ENCODE measurements at regions of chr6 and their contacts with region 1.

Region 1: GRCh38 chr6:158026054-158026900 is 44.6 kb downstream of the SYNJ2 start:
- DNase-seq: peak; percentile 78 to 93
- ATAC-seq: peak; percentile 87 to 90
- H3K4me3 ChIP-seq: no peak overlapping the region
- H3K27ac ChIP-seq: peak overlapping the region; percentile 87 to 94
- H3K4me1 ChIP-seq: peaks cover 67% of the 10 kb centered on the region
- CTCF ChIP-seq: peak; percentile 53
- EP300 ChIP-seq: peak; percentile 68 to 77; a peak in 2 of 5 replicates
- POLR2A ChIP-seq: no peak
- RAD21 ChIP-seq: peak; percentile 32 to 49; a peak in 4 of 5 replicates

Region 2: GRCh38 chr6:156791320-156791850 is 1234.9 kb before region 1 on chr6:
- CTCF ChIA-PET with region 1: no interaction called
- POLR2A ChIA-PET with region 1: no interaction called
- DNase-seq: no peak
- ATAC-seq: no peak
- H3K4me3 ChIP-seq: no peak overlapping the region
- H3K27ac ChIP-seq: no peak overlapping the region
- H3K4me1 ChIP-seq: peaks cover 21% of the 10 kb centered on the region
- CTCF ChIP-seq: no peak
- EP300 ChIP-seq: no peak
- POLR2A ChIP-seq: no peak
- RAD21 ChIP-seq: no peak

Region 3: GRCh38 chr6:157921685-157922367 is 104.5 kb before region 1 on chr6:
- CTCF ChIA-PET with region 1: no interaction called
- POLR2A ChIA-PET with region 1: no interaction called
- DNase-seq: no peak
- ATAC-seq: no peak
- H3K4me3 ChIP-seq: no peak overlapping the region
- H3K27ac ChIP-seq: no peak overlapping the region
- H3K4me1 ChIP-seq: no peaks in the 10 kb centered on the region
- CTCF ChIP-seq: no peak
- EP300 ChIP-seq: no peak
- POLR2A ChIP-seq: no peak
- RAD21 ChIP-seq: no peak

Region 4: DNA sequence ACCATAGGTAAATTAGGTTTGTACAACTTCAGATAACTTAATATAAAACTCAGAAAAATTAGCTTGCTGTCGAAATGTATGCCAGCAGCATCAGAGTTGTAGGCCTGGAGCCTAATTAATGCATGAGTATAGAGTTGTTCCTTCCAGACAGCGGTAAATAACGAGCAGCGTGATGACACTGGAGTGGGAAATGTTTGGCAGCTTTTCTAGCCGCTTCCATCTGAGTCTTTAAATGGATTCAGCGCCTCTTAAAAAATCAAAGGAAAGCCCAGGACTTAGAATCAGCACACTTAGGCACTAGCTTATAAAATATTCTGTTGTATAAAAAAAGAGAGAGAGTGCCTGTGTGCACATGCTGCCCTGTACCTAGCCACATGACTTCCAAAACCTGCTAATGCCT is 88.4 kb before region 1 on chr6:
- CTCF ChIA-PET with region 1: no interaction called
- POLR2A ChIA-PET with region 1: no interaction called
- DNase-seq: no peak
- ATAC-seq: no peak
- H3K4me3 ChIP-seq: no peak overlapping the region
- H3K27ac ChIP-seq: no peak overlapping the region
- H3K4me1 ChIP-seq: no peaks in the 10 kb centered on the region
- CTCF ChIP-seq: no peak
- EP300 ChIP-seq: no peak
- POLR2A ChIP-seq: no peak
- RAD21 ChIP-seq: no peak

Region 5: GRCh38 chr6:157981395-157982296 is 44.6 kb before region 1 on chr6 and contains the start of gene SYNJ2:
- CTCF ChIA-PET with region 1: interaction called, 26 read pairs
- POLR2A ChIA-PET with region 1: interaction called, 4 read pairs
- DNase-seq: peak; percentile 67 to 71
- ATAC-seq: peak; percentile 77 to 78
- H3K4me3 ChIP-seq: peak within 1 kb of the TSS; percentile 89
- H3K27ac ChIP-seq: peak within 1 kb of the TSS; percentile 89 to 97
- H3K4me1 ChIP-seq: peaks cover 40% of the 10 kb centered on the region
- CTCF ChIP-seq: peak; percentile 61
- EP300 ChIP-seq: no peak
- POLR2A ChIP-seq: no peak; the same call in 1 of the 2 replicates
- RAD21 ChIP-seq: peak; percentile 12 to 61; a peak in 3 of 5 replicates
- polyA plus RNA-seq, gene SYNJ2: 22.3 and 24.7 TPM in 2 replicates

Region 6: GRCh38 chr6:157989541-157990289 is 36.6 kb before region 1 on chr6:
- CTCF ChIA-PET with region 1: interaction called, 26 read pairs
- POLR2A ChIA-PET with region 1: no interaction called
- DNase-seq: peak in 1 of 2 experiments; percentile 50
- ATAC-seq: peak; percentile 65 to 68
- H3K4me3 ChIP-seq: 0 out of 3 replicates have a peak overlapping the region, but pooled peaks have one; percentile 11
- H3K27ac ChIP-seq: peak overlapping the region; percentile 78 to 82
- H3K4me1 ChIP-seq: peaks cover 84% of the 10 kb centered on the region
- CTCF ChIP-seq: no peak
- EP300 ChIP-seq: peak in 1 of 2 experiments; percentile 20; a peak in 1 of 5 replicates
- POLR2A ChIP-seq: no peak
- RAD21 ChIP-seq: no peak

Region 7: GRCh38 chr6:158006821-158007570 is 19.3 kb before region 1 on chr6:
- CTCF ChIA-PET with region 1: interaction called, 11 read pairs
- POLR2A ChIA-PET with region 1: interaction called, 3 read pairs
- DNase-seq: no peak
- ATAC-seq: no peak
- H3K4me3 ChIP-seq: no peak overlapping the region
- H3K27ac ChIP-seq: no peak overlapping the region
- H3K4me1 ChIP-seq: peaks cover 32% of the 10 kb centered on the region; the same call in 2 of the 3 replicates
- CTCF ChIP-seq: no peak
- EP300 ChIP-seq: no peak
- POLR2A ChIP-seq: no peak
- RAD21 ChIP-seq: no peak

Region 8: GRCh38 chr6:158040051-158040803 is 13.9 kb after region 1 on chr6:
- CTCF ChIA-PET with region 1: interaction called, 25 read pairs
- POLR2A ChIA-PET with region 1: interaction called, 8 read pairs
- DNase-seq: peak; percentile 88 to 95
- ATAC-seq: peak; percentile 76 to 84
- H3K4me3 ChIP-seq: peak overlapping the region; percentile 20; the same call in 1 of the 3 replicates
- H3K27ac ChIP-seq: peak overlapping the region; percentile 94 to 100
- H3K4me1 ChIP-seq: peaks cover 70% of the 10 kb centered on the region
- CTCF ChIP-seq: no peak
- EP300 ChIP-seq: peak; percentile 88 to 90; a peak in 4 of 5 replicates
- POLR2A ChIP-seq: no peak
- RAD21 ChIP-seq: peak in 1 of 2 experiments; percentile 31; a peak in 2 of 5 replicates

Region 9: GRCh38 chr6:158060455-158061360 is 34.4 kb after region 1 on chr6:
- CTCF ChIA-PET with region 1: interaction called, 19 read pairs
- POLR2A ChIA-PET with region 1: interaction called, 5 read pairs
- DNase-seq: peak; percentile 46 to 87
- ATAC-seq: peak; percentile 74 to 80
- H3K4me3 ChIP-seq: no peak overlapping the region
- H3K27ac ChIP-seq: peak overlapping the region; percentile 94 to 98
- H3K4me1 ChIP-seq: peaks cover 60% of the 10 kb centered on the region
- CTCF ChIP-seq: no peak
- EP300 ChIP-seq: peak; percentile 58 to 75; a peak in 3 of 5 replicates
- POLR2A ChIP-seq: no peak
- RAD21 ChIP-seq: 0 out of 5 replicates have a peak, but pooled peaks of 1 of the 2 experiments have one; percentile 23

Region 10: DNA sequence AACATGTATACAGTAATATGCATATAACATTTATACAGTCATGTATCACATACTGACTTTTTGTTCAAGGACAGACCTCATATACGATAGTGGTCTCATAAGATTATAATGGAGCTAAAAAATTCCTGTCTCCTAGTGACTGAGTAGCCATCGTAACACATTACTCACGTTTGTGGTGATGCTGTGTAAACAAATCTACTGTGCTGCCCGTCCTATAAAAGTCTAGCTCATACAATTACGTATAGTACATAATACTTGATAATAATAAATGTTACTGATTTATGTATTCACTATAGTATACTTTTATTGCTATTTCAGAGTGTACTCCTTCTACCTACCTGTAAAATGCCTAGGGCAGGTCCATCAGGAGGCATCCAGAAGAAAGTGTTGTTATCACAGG is 124.4 kb after region 1 on chr6:
- CTCF ChIA-PET with region 1: no interaction called
- POLR2A ChIA-PET with region 1: no interaction called
- DNase-seq: no peak
- ATAC-seq: peak; percentile 43 to 71; a peak in 3 of 6 replicates
- H3K4me3 ChIP-seq: no peak overlapping the region
- H3K27ac ChIP-seq: no peak overlapping the region
- H3K4me1 ChIP-seq: 0 out of 3 replicates have a peak, but pooled peaks cover 6% of the 10 kb centered on the region
- CTCF ChIP-seq: no peak
- EP300 ChIP-seq: no peak
- POLR2A ChIP-seq: no peak
- RAD21 ChIP-seq: no peak

Measured in A549 (cell line).